ENCODE measurements at regions of chr1 and their contacts with region 1.

Region 1: DNA sequence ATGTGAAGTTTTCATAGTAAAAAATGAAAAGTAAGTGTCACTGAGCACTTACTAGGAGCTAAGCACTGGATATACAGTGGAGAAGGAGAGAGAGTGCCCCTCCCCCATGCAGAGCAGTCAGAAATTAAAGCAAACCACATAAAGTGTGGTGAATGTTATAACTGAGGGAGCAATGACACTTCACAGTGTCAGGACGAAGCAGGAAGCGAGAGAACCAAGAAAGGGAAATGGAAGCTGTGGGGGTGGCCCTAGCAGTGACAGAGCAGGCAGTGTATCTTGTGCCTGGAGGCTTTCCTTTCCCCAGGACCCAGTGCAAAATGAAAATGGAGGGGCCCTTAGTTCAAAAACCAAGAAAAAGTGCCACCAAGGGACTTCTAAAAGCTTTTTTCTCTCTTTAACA is 21.5 kb upstream of the RCAN3 start:
- DNase-seq: peak; percentile 80
- ATAC-seq: peak; percentile 75
- H3K4me3 Mint-ChIP-seq: peak overlapping the region; percentile 59
- H3K27ac Mint-ChIP-seq: peak overlapping the region; percentile 97
- H3K4me1 Mint-ChIP-seq: peaks cover 58% of the 10 kb centered on the region
- H3K27me3 Mint-ChIP-seq: no peaks in the 10 kb centered on the region
- CTCF ChIP-seq: no peak

Region 2: GRCh38 chr1:24491577-24492360 is 10.7 kb after region 1 on chr1:
- CTCF ChIA-PET with region 1: interaction called, 5 read pairs
- POLR2A ChIA-PET with region 1: interaction called, 11 read pairs
- intact Hi-C with region 1: no loop called
- DNase-seq: no peak
- ATAC-seq: no peak
- H3K4me3 Mint-ChIP-seq: no peak overlapping the region
- H3K27ac Mint-ChIP-seq: no peak overlapping the region
- H3K4me1 Mint-ChIP-seq: peaks cover 42% of the 10 kb centered on the region
- H3K27me3 Mint-ChIP-seq: no peaks in the 10 kb centered on the region
- CTCF ChIP-seq: peak; percentile 31

Region 3: GRCh38 chr1:24526940-24527542 is 45.9 kb after region 1 on chr1:
- CTCF ChIA-PET with region 1: interaction called, 14 read pairs
- POLR2A ChIA-PET with region 1: interaction called, 3 read pairs
- intact Hi-C with region 1: loop called (anchors 10 kb)
- DNase-seq: peak; percentile 70
- ATAC-seq: peak; percentile 65
- H3K4me3 Mint-ChIP-seq: no peak overlapping the region
- H3K27ac Mint-ChIP-seq: peak overlapping the region; percentile 55
- H3K4me1 Mint-ChIP-seq: peaks cover 57% of the 10 kb centered on the region
- H3K27me3 Mint-ChIP-seq: no peaks in the 10 kb centered on the region
- CTCF ChIP-seq: peak; percentile 82

Region 4: GRCh38 chr1:24536391-24536840 is 55.3 kb after region 1 on chr1:
- CTCF ChIA-PET with region 1: interaction called, 15 read pairs
- POLR2A ChIA-PET with region 1: interaction called, 11 read pairs
- intact Hi-C with region 1: loop called (anchors 10 kb)
- DNase-seq: peak; percentile 84
- ATAC-seq: peak; percentile 61
- H3K4me3 Mint-ChIP-seq: peak overlapping the region; percentile 72
- H3K27ac Mint-ChIP-seq: peak overlapping the region; percentile 98
- H3K4me1 Mint-ChIP-seq: peaks cover 71% of the 10 kb centered on the region
- H3K27me3 Mint-ChIP-seq: no peaks in the 10 kb centered on the region
- CTCF ChIP-seq: no peak

Region 5: DNA sequence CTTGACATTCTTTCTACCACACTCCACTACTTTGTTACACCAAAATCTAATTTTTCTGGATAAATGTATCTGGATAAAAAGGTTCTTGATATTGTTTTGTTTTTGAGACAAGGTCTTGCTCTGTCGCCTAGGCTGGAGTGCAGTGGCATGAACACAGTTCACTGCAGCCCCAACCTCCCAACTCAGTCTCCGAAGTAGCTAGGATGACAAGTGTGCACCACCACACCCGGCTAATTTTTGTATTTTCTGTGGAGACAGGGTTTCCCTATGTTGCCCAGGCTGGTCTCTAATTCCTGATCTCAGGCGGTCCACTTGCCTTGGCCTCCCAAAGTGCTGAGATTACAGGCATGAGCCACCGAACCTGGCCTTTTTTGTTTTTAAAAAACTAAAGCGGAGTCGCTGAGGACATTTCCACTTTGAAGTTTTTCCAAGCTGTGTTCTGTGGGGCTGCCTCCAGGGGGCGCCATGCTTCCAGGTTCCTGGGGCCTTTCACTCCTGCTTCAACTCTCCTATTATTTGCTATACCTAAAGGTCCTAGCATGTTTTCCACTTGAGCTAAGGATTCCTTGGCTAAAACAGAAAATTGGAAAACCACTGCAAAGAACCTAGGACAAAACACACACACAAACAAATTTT is 60.7 kb after region 1 on chr1:
- CTCF ChIA-PET with region 1: interaction called, 4 read pairs
- POLR2A ChIA-PET with region 1: interaction called, 11 read pairs
- intact Hi-C with region 1: loop called (anchors 10 kb)
- DNase-seq: peak; percentile 45
- ATAC-seq: no peak
- H3K4me3 Mint-ChIP-seq: no peak overlapping the region
- H3K27ac Mint-ChIP-seq: peak overlapping the region; percentile 84
- H3K4me1 Mint-ChIP-seq: peaks cover 60% of the 10 kb centered on the region
- H3K27me3 Mint-ChIP-seq: no peaks in the 10 kb centered on the region
- CTCF ChIP-seq: peak; percentile 83

Measured in activated CD8-positive, alpha-beta T cell treated with anti-CD3 and anti-CD28 coated beads for 36 hours (primary cell).